ENCODE measurements at regions of chr4 and their contacts with region 1.

Region 1: GRCh38 chr4:109998867-109999584 is 86.3 kb downstream of the EGF start:
- DNase-seq: no peak
- H3K4me3 ChIP-seq: no peak overlapping the region
- H3K27ac ChIP-seq: no peak overlapping the region
- H3K4me1 ChIP-seq: no peaks in the 10 kb centered on the region
- H3K27me3 ChIP-seq: peaks cover 0 to 16% of the 10 kb centered on the region in 2 donors
- CTCF ChIP-seq: peak; percentile 57 to 60

Region 2: DNA sequence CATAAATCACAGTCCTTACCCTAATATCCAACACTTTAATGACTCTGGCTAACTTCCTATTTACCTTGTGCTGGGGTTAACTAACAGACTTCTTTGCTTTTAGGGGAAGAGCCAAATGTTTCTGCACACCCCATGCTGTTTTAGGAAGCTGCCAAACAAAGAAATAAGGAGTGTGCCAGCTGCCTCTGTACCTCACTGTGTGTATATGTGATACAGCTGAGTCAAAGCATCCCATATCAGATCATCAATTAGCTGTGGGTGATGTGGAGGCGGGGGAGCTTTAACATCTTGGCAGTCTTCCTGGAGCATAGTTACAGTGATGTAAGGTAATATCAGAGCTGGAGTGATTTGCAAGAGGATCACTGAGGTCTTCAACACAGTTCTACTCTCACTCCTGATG is 792.0 kb before region 1 on chr4:
- intact Hi-C with region 1: no loop called
- DNase-seq: no peak
- H3K4me3 ChIP-seq: no peak overlapping the region
- H3K27ac ChIP-seq: no peak overlapping the region
- H3K4me1 ChIP-seq: no peaks in the 10 kb centered on the region
- H3K27me3 ChIP-seq: no peaks in the 10 kb centered on the region
- CTCF ChIP-seq: no peak

Region 3: DNA sequence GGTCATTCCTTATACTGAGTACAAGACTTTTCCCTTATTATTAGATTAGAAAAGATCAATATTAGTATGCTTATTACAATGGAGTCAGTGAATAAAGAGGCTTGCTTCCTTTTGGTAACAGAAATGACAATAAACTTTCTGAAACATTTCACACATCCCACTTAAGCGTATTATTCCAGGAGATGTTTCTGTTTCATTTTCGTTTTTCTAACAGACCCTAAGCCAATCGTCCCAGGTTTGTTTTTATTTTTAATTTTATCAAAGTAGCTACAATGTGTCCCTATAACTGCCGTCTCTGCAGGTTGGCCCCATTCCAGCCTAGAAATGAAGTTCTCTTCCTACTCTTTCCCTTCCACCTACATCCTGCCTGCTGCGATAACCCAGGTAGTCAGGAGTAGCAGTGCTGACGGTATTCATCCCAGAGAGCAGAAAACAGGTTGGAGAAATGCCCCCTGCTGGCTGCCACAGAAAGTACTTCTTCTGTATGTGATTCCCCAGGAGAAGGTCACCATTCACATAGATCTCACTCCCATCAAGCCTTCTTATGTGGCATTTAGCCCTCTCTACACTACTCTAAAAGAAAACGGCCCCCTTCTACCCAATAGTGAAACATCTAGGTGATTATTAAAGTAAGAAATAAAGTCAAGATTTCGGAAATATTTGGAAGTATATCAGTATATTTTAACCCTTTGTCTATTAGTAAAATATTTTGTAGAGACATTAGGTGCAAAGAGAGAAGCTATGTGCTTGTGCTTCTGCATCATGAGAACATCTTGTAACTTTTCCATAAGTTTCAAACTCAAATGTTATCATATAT is 517.3 kb after region 1 on chr4:
- intact Hi-C with region 1: loop called (anchors 5 kb)
- DNase-seq: peak; percentile 47 to 70
- H3K4me3 ChIP-seq: peak overlapping the region; percentile 40 to 42
- H3K27ac ChIP-seq: no peak overlapping the region
- H3K4me1 ChIP-seq: no peaks in the 10 kb centered on the region
- H3K27me3 ChIP-seq: peaks cover 0 to 3% of the 10 kb centered on the region in 2 donors
- CTCF ChIP-seq: peak; percentile 41 to 56

Measured in tibial artery (tissue), 4 donors.